ENCODE measurements at regions of chr12 and their contacts with region 1.

Region 1: GRCh38 chr12:82326905-82327503 is 31.2 kb downstream of the CCDC59 start:
- DNase-seq: peak in 2 of 42 donors; percentile 12 to 23

Region 2: DNA sequence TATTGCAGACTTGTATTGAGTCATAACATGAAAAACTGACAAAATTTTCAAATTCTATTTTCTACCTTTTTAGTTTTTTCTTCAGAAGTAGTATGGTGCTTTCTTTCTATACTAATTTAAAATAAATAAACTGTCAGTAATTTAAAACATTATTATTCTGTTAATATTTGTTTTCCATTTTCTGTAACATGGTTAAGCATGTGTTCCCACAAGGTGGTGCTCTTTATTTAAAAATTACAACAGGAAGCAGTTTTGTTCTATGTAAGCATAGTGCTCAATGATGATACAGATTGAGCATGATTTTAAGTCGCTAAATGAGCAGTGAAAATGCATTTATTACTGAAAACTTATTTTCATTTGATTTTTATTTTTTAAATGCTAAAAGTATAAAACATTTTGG is 682.5 kb before region 1 on chr12:
- intact Hi-C with region 1: loop called (anchors 5 kb)
- DNase-seq: peak in 2 of 42 donors; percentile 11 to 40

Region 3: GRCh38 chr12:82015623-82016347 is 311.2 kb before region 1 on chr12:
- intact Hi-C with region 1: no loop called
- DNase-seq: no peak

Region 4: GRCh38 chr12:82425241-82425640 is 98.2 kb after region 1 on chr12:
- intact Hi-C with region 1: no loop called
- DNase-seq: no peak

Region 5: GRCh38 chr12:82474798-82475184 is 147.8 kb after region 1 on chr12:
- intact Hi-C with region 1: no loop called
- DNase-seq: no peak

Measured in head of caudate nucleus (tissue), 42 donors.